ENCODE measurements at regions of chr10 and their contacts with region 1.

Region 1: GRCh38 chr10:97914837-97915211 is 65.2 kb downstream of the GOLGA7B start:
- DNase-seq: peak; percentile 1 to 34 (median 11)
- H3K4me3 ChIP-seq: no peak overlapping the region
- H3K4me3 Mint-ChIP-seq: no peak overlapping the region
- H3K27ac ChIP-seq: no peak overlapping the region
- H3K27ac Mint-ChIP-seq: no peak overlapping the region
- H3K4me1 ChIP-seq: no peaks in the 10 kb centered on the region
- H3K4me1 Mint-ChIP-seq: peaks cover 6% of the 10 kb centered on the region
- H3K27me3 ChIP-seq: peaks cover 0 to 2% of the 10 kb centered on the region in 2 donors
- H3K27me3 Mint-ChIP-seq: peaks cover 11 to 27% (median 18%) of the 10 kb centered on the region in 3 donors
- CTCF ChIP-seq: peak; percentile 92

Region 2: DNA sequence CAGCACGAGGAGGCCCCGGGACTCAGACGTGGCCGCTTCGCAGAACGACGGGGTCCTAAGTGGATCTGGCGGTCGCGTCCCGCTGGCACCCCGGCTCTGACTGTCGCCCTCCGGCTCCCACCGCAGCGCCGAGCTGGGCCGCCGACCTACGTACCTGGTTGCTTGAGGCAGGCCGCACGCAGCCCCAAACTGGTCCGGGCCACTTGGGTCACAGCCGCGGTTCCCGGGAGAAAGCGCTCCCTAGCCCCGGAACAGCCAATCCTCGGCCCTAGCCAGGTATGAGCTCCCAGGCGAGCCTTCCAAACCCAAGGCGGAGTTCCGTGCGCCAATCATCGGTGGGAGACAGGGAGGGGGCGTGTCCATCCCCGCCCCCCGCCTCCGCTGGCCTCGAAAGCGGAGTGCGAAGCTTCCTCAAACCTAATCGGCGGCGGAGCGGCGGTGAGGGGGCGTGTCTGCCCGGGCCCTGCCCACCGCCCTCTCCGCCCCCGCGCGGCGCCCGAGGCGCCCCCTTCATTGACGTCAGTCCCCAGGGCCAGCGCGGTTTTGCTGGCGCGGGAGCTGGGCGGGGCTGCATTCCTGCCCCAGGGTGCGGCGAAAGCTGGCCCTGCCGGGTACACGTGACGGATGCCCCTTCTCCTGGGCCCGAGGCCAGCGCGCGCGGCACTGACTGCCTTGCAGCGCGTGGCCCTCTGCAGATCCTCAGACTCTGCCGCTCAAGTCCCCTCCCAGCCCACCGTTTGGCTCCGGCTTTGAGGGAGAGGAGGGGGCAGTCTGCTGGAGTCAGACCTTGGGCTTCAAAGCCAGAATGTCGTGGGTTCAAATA is 227.7 kb before region 1 on chr10 and contains the start of gene AVPI1:
- intact Hi-C with region 1: no loop called
- DNase-seq: peak; percentile 93 to 96 (median 95)
- H3K4me3 ChIP-seq: peak within 1 kb of the TSS; percentile 59 to 81 (median 76)
- H3K4me3 Mint-ChIP-seq: peak within 1 kb of the TSS; percentile 88 to 90
- H3K27ac ChIP-seq: peak within 1 kb of the TSS; percentile 24 to 81
- H3K27ac Mint-ChIP-seq: peak within 1 kb of the TSS; percentile 87 to 96 (median 93)
- H3K4me1 ChIP-seq: peaks cover 65 to 82% of the 10 kb centered on the region in 2 donors
- H3K4me1 Mint-ChIP-seq: peaks cover 63% of the 10 kb centered on the region
- H3K27me3 ChIP-seq: no peaks in the 10 kb centered on the region
- H3K27me3 Mint-ChIP-seq: peaks cover 0 to 2% (median 1%) of the 10 kb centered on the region in 3 donors
- CTCF ChIP-seq: no peak
- polyA plus RNA-seq, gene AVPI1: 2.0 to 11.2 (median 2.9) TPM

Region 3: GRCh38 chr10:97875391-97875790 is 39.4 kb before region 1 on chr10:
- intact Hi-C with region 1: no loop called
- DNase-seq: no peak
- H3K4me3 ChIP-seq: no peak overlapping the region
- H3K4me3 Mint-ChIP-seq: no peak overlapping the region
- H3K27ac ChIP-seq: no peak overlapping the region
- H3K27ac Mint-ChIP-seq: no peak overlapping the region
- H3K4me1 ChIP-seq: no peaks in the 10 kb centered on the region
- H3K4me1 Mint-ChIP-seq: no peaks in the 10 kb centered on the region
- H3K27me3 ChIP-seq: peaks cover 2% of the 10 kb centered on the region in 2 donors
- H3K27me3 Mint-ChIP-seq: peaks cover 7 to 13% (median 9%) of the 10 kb centered on the region in 3 donors
- CTCF ChIP-seq: no peak

Region 4: GRCh38 chr10:97991871-97992270 is 77.0 kb after region 1 on chr10:
- intact Hi-C with region 1: no loop called
- DNase-seq: no peak
- H3K4me3 ChIP-seq: no peak overlapping the region
- H3K4me3 Mint-ChIP-seq: no peak overlapping the region
- H3K27ac ChIP-seq: no peak overlapping the region
- H3K27ac Mint-ChIP-seq: no peak overlapping the region
- H3K4me1 ChIP-seq: no peaks in the 10 kb centered on the region
- H3K4me1 Mint-ChIP-seq: no peaks in the 10 kb centered on the region
- H3K27me3 ChIP-seq: peaks cover 0 to 2% of the 10 kb centered on the region in 2 donors
- H3K27me3 Mint-ChIP-seq: peaks cover 2 to 15% (median 6%) of the 10 kb centered on the region in 3 donors
- CTCF ChIP-seq: no peak

Region 5: GRCh38 chr10:98041372-98042043 is 126.7 kb after region 1 on chr10:
- intact Hi-C with region 1: loop called (anchors 2 to 5 kb)
- DNase-seq: peak; percentile 3 to 24 (median 10)
- H3K4me3 ChIP-seq: no peak overlapping the region
- H3K4me3 Mint-ChIP-seq: no peak overlapping the region
- H3K27ac ChIP-seq: no peak overlapping the region
- H3K27ac Mint-ChIP-seq: no peak overlapping the region
- H3K4me1 ChIP-seq: no peaks in the 10 kb centered on the region
- H3K4me1 Mint-ChIP-seq: peaks cover 1% of the 10 kb centered on the region
- H3K27me3 ChIP-seq: peaks cover 31 to 49% of the 10 kb centered on the region in 2 donors
- H3K27me3 Mint-ChIP-seq: peaks cover 47 to 72% (median 56%) of the 10 kb centered on the region in 3 donors
- CTCF ChIP-seq: peak; percentile 64